Common myeloid progenitor, CD34-positive (primary cell): ENCODE measurements at regions of chr9 and their contacts with region 1.

Region 1: GRCh38 chr9:73183917-73184861 is 32.5 kb downstream of the ANXA1 start:
- DNase-seq: peak; percentile 62 to 81 (median 73)
- H3K4me3 ChIP-seq: no peak overlapping the region
- H3K27ac ChIP-seq: no peak overlapping the region
- H3K4me1 ChIP-seq: peaks cover 0 to 16% (median 3%) of the 10 kb centered on the region in 4 experiments
- H3K27me3 ChIP-seq: no peaks in the 10 kb centered on the region

Region 2: GRCh38 chr9:73073337-73074175 is 110.6 kb before region 1 on chr9:
- CTCF ChIA-PET with region 1: no interaction called
- POLR2A ChIA-PET with region 1: no interaction called
- DNase-seq: no peak
- H3K4me3 ChIP-seq: no peak overlapping the region
- H3K27ac ChIP-seq: no peak overlapping the region
- H3K4me1 ChIP-seq: no peaks in the 10 kb centered on the region
- H3K27me3 ChIP-seq: no peaks in the 10 kb centered on the region

Region 3: DNA sequence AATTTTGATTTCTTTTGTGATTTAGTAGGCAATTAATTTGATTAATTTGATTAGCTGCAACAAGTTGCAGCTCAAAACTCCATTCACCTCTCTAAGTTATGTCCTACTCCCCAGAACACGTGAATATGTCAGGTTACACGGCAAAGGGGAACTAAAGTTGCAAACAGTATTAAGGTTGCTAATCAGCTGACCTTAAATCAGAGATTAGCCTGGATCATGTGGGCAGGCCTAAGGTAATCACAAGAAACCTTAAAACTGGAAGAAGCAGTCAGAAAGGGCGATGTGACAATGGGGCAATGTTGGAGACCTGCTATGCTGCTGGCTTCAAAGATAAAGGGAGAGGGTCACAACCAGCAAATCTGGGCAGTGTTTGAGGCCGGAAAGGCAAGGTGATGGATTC is 79.8 kb before region 1 on chr9:
- CTCF ChIA-PET with region 1: interaction called, 51 read pairs
- POLR2A ChIA-PET with region 1: no interaction called
- DNase-seq: peak in 1 of 3 donors; percentile 8
- H3K4me3 ChIP-seq: no peak overlapping the region
- H3K27ac ChIP-seq: no peak overlapping the region
- H3K4me1 ChIP-seq: no peaks in the 10 kb centered on the region
- H3K27me3 ChIP-seq: no peaks in the 10 kb centered on the region

Region 4: GRCh38 chr9:73116031-73116430 is 68.2 kb before region 1 on chr9:
- CTCF ChIA-PET with region 1: interaction called, 51 read pairs
- POLR2A ChIA-PET with region 1: no interaction called
- DNase-seq: peak in 1 of 3 donors; percentile 13
- H3K4me3 ChIP-seq: no peak overlapping the region
- H3K27ac ChIP-seq: no peak overlapping the region
- H3K4me1 ChIP-seq: peaks cover 0 to 6% (median 4%) of the 10 kb centered on the region in 4 experiments
- H3K27me3 ChIP-seq: no peaks in the 10 kb centered on the region

Region 5: GRCh38 chr9:73173557-73174329 is 10.4 kb before region 1 on chr9:
- CTCF ChIA-PET with region 1: interaction called, 15 read pairs
- POLR2A ChIA-PET with region 1: no interaction called
- DNase-seq: no peak
- H3K4me3 ChIP-seq: no peak overlapping the region
- H3K27ac ChIP-seq: no peak overlapping the region
- H3K4me1 ChIP-seq: no peaks in the 10 kb centered on the region
- H3K27me3 ChIP-seq: no peaks in the 10 kb centered on the region